Gastrocnemius medialis (tissue), 4 donors: ENCODE measurements at regions of chr10 and their contacts with region 1.

Region 1: DNA sequence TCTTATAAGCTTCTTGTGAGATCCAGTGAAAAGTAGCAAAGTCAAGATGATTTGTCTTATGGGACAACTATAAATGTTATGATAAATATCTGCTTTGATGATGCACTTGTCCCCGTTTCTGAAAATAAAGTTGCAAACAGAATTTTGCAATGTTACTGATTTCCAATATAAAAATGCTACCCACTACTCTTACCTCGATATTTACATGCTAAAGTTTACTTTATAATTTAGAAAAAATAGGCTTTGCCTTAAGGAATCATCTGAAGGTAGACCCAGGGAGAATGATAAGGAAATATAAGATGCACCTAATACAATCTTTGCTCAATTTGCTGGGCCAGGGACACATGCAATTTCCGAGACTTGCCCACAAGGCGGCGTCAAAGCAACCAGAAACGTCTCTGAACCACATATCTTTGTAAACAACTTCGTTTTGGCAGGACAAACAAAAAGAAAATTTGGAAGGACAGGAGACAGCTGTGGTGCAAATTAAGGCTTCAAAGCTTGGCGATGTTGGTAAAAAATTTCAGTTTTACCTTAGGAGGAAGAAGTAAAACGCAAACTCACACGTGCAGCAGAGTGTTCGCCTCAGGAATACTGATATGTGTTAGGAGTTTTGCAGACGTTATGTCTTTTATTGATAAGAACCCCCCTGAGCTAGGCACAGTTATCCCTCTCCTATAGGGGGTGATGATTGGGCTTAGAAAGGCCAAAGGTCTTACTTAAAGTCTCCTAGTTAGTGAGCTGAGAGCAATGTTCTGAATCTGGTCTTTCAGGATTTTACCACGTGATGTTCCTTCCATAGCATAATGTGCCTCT is 134.4 kb downstream of the PRKCQ start:
- DNase-seq: peak; percentile 41 to 66
- ATAC-seq: peak; percentile 87 to 94
- H3K4me3 ChIP-seq: peak overlapping the region in 1 of 4 donors; percentile 31
- H3K27ac ChIP-seq: peak overlapping the region; percentile 45 to 83 (median 72)
- H3K4me1 ChIP-seq: peaks cover 8 to 11% of the 10 kb centered on the region in 2 donors
- H3K27me3 ChIP-seq: no peaks in the 10 kb centered on the region
- CTCF ChIP-seq: peak; percentile 49 to 65 (median 58)
- POLR2A ChIP-seq: no peak

Region 2: DNA sequence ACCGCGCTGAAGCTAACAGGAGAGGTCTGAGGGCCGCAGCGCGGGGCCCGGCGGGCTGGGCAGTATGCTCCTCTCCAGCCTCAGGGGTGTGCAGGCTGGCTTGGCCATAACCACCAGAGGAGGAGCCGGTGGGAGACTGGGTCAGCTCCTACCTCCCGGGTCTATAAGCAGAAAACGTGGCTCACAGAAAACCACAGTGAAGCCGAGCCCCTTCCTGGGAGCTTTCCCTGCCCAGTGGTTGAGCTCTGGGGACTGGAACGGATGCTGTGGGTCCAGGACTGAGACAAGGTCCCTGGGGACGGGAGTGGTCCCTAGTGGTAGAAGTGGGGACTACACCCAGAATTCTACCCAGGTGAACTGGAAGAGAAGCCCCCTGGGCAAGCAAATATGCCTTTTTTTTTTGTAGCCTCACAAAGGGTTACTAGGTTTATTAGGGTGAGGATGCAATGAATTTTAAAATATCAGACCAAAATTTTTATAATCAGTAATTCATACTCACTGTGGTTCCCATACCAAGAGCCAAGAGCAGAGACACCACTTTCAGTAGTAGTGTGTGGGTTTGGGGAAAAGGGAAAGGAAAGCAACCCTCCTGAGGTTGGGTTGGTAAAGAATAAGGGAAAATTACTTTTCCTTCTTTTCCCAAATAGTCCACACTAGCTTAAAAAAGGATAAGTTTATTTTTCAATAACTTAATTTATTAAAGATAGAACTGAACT is 202.3 kb after region 1 on chr10:
- in situ Hi-C with region 1: loop called in 2 of 4 experiments (anchors 25 kb)
- intact Hi-C with region 1: loop called (anchors 5 kb)
- DNase-seq: peak; percentile 7 to 43
- ATAC-seq: peak; percentile 50 to 74
- H3K4me3 ChIP-seq: no peak overlapping the region
- H3K27ac ChIP-seq: no peak overlapping the region
- H3K4me1 ChIP-seq: no peaks in the 10 kb centered on the region
- H3K27me3 ChIP-seq: no peaks in the 10 kb centered on the region
- CTCF ChIP-seq: peak; percentile 48 to 75 (median 64)
- POLR2A ChIP-seq: no peak

Region 3: DNA sequence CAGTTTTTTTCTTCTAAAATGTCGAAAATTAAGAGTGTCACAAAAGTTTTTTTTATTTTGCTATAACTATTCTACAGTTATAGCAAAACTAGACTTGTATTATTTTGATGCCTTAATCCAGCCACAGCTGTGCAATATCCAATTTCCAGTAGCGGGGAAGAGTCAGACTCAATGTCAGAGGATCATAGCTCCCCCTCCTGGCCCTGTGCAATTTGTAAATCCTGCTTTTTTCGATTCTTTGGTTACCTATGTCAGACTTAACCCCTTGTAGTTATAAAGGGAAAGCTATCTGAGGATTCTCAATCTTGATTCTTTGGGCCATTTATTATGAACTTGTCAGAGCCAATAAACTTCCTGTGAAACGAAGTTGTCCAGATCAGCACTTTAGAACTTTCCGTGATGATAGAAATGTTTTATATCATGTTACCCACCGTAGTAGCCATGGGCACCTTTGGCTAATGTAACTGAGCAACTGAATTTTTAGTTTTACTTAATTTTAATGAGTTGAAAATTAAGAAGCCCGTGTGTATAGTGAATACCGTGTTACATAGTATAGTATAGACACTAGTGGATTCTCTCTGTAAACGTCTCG is 222.1 kb after region 1 on chr10:
- in situ Hi-C with region 1: loop called (anchors 10 to 25 kb)
- intact Hi-C with region 1: loop called (anchors 10 kb)
- DNase-seq: peak in 1 of 2 donors; percentile 17
- ATAC-seq: peak; percentile 74 to 82
- H3K4me3 ChIP-seq: no peak overlapping the region
- H3K27ac ChIP-seq: no peak overlapping the region
- H3K4me1 ChIP-seq: peaks cover 10 to 15% of the 10 kb centered on the region in 2 donors
- H3K27me3 ChIP-seq: no peaks in the 10 kb centered on the region
- CTCF ChIP-seq: peak; percentile 27 to 52 (median 31)
- POLR2A ChIP-seq: no peak

Region 4: DNA sequence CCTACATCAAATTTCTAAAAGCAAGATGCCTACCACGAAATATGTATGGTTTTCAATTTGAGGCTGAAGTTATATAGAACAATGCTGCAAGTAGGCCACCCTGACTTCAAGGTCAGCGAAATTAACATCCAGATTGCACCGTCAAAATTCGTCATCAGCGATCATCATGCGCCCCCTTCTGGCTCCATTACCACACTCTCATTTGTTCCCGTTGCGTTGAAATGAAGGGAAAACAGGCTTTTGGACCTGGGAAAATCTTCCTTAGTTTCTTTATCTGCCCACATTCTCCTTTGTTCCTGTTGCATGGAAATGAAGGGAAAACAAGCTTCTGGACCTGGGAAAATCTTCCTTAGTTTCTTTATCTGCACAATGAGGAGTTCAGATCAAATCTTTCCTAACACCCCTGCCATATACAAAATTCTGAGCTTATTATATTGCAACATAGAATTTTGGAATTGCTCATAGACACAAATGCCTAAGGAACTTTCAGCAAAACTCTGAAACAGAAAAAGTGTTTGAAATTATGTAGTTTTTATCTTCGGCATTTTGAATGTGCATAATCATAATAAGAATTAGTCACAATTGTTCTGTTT is 232.6 kb after region 1 on chr10:
- in situ Hi-C with region 1: loop called in 3 of 4 experiments (anchors 10 to 25 kb)
- intact Hi-C with region 1: loop called (anchors 10 kb)
- DNase-seq: peak in 1 of 2 donors; percentile 27
- ATAC-seq: peak; percentile 52 to 84
- H3K4me3 ChIP-seq: no peak overlapping the region
- H3K27ac ChIP-seq: no peak overlapping the region
- H3K4me1 ChIP-seq: no peaks in the 10 kb centered on the region
- H3K27me3 ChIP-seq: no peaks in the 10 kb centered on the region
- CTCF ChIP-seq: peak; percentile 37 to 67 (median 54)
- POLR2A ChIP-seq: no peak